ENCODE measurements at regions of chr5 and their contacts with region 1.

Region 1: DNA sequence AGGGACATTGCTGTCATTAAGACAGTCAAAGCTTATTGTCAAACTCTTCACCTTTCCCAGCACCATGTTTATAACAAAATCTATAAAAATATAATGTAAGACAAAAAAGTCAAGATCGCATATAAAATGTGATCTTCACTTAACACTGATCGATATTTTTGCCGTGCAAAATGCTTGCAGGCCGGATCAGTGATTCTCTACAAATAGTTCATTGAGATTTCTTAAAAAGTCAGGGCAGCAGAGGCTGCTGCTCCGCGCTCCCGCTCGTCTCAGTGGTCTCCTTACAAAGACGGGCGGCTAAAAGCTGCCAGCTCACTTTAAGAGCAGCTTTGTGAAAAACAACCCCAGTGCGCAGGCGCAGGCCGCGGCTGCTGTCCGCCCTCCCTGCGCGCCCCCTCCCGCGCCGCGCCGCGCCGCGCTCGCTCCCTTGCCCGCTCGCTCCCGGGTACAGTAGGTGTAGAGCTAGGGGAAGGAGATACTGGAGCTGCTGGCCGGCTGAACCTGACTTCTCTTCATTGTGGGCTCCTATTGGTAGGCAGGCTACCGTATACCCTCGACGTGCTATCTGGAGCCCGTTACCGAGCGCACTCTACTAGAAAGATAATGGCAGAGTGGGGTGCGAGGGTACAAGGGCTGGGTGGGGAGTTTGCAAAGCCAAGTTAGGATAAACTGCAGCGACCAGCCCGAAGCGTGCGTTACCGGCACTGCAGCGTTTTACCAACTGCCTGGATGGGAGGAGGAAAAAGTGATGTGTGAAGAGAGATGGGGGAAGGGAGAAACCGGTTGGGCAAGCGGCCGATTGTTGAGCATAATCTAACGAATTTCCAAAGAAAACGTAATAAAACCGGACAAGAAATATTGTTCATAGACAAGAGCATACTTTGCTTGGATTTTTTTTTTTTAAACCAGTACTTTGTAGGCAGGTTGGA is at the start of gene ARRDC3:
- DNase-seq: peak; percentile 96 to 97
- H3K4me3 ChIP-seq: peak within 1 kb of the TSS; percentile 63
- H3K4me1 ChIP-seq: peaks cover 10% of the 10 kb centered on the region
- H3K27me3 ChIP-seq: no peaks in the 10 kb centered on the region

Region 2: DNA sequence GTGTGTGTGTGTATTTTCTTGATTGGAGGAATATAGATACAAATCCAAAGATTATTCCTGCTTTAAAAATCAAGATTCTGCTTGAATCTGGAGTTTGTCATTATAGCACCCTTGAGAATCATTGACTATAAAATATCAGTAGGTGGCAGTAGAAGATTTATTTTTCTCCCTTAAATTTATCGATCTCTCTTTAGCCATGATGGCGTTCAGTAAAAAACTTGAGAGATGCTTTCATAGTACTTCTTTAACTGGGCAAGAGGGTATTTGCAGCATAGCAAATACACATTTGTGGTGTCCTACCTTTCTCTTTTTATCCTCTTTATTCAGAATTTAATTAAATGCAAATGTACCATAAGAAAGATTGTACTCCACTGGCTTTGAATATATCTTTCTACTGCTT is 517.0 kb before region 1 on chr5:
- in situ Hi-C with region 1: loop called (anchors 10 kb)
- DNase-seq: peak in 1 of 2 experiments; percentile 72
- H3K4me3 ChIP-seq: no peak overlapping the region
- H3K4me1 ChIP-seq: no peaks in the 10 kb centered on the region
- H3K27me3 ChIP-seq: no peaks in the 10 kb centered on the region

Region 3: GRCh38 chr5:90932052-90932699 is 451.1 kb before region 1 on chr5:
- in situ Hi-C with region 1: no loop called
- DNase-seq: peak; percentile 75 to 79
- H3K4me3 ChIP-seq: no peak overlapping the region
- H3K4me1 ChIP-seq: peaks cover 14% of the 10 kb centered on the region
- H3K27me3 ChIP-seq: no peaks in the 10 kb centered on the region

Region 4: DNA sequence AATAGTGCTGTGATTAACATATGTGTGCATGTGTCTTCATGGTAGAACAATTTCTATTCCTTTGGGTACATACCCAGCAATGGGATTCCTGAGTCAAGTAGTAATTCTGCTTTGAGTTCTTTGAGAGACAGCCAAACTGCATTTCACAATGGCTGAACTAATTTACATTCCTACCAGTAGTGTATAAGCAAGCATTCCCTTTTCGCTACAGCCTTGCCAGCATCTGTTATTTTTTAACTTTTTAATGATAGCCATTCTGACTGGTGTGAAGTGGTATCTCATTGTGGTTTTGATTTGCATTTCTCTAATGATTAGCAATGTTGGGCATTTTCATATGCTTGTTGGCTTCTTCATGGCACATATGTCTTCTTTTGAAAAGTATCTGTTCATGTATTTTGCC is 308.7 kb before region 1 on chr5:
- in situ Hi-C with region 1: no loop called
- DNase-seq: no peak
- H3K4me3 ChIP-seq: no peak overlapping the region
- H3K4me1 ChIP-seq: no peaks in the 10 kb centered on the region
- H3K27me3 ChIP-seq: no peaks in the 10 kb centered on the region

Region 5: DNA sequence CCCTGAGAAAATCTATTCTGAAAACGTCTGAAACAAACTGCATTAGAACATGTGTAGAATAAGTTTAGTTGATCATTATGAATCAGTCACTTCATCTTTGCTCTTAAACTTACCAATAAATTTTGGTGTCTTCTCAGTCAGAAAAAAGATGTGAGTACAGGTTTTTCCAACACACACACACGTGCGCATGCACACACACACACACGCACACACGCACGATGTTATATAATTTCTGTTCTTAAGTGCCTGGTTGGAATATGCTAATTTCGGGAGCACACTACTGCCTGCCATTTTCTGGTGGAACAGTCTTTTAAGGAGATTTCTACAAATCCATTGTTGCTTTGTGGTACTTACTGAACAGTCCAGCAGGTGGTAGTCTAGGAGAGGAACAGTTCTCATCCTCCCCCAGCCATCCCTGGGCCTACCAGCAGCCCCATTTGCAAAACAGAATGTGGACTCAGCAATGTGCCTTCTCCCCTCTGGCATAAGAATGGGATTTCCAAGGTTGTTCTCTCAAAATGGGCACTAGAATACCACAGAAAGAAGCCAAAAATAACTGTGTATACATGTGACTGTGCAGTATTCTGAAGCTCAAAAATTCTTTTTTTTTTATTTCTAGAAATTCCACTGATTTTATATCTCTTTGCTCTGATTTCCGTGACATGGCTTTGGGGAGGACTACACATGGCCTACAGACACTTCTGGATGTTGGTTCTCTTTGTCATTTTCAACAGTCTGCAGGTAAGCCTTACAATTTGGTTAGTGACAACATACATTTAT is 281.5 kb before region 1 on chr5:
- in situ Hi-C with region 1: loop called (anchors 10 kb)
- DNase-seq: peak; percentile 84 to 86
- H3K4me3 ChIP-seq: no peak overlapping the region
- H3K4me1 ChIP-seq: peaks cover 34% of the 10 kb centered on the region
- H3K27me3 ChIP-seq: no peaks in the 10 kb centered on the region

Region 6: GRCh38 chr5:91146221-91146620 is 237.1 kb before region 1 on chr5:
- in situ Hi-C with region 1: no loop called
- DNase-seq: no peak
- H3K4me3 ChIP-seq: no peak overlapping the region
- H3K4me1 ChIP-seq: peaks cover 16% of the 10 kb centered on the region
- H3K27me3 ChIP-seq: no peaks in the 10 kb centered on the region

Region 7: DNA sequence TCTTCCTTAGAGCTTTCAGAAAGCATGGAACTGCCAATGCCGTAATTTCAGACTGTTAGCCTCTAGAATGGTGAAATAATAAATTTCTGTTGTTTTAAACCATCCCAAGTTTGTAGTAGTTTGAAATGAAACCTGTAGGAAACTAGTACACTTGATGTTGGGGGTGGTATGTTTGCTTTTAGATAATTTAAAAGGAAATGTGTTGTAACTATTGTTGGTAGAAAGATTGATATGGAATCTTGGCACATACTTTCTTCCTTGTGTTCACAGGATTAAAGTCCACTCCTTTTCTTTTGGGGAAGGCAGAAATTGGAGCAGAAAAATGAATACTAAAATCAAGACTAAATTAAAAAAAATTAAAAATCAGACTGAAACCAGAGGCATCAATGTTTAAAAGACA is 65.8 kb after region 1 on chr5:
- in situ Hi-C with region 1: no loop called
- DNase-seq: no peak
- H3K4me3 ChIP-seq: no peak overlapping the region
- H3K4me1 ChIP-seq: no peaks in the 10 kb centered on the region
- H3K27me3 ChIP-seq: no peaks in the 10 kb centered on the region

Measured in HAP-1 (cell line).